ENCODE measurements at regions of chr12 and their contacts with region 1.

Region 1: GRCh38 chr12:18849080-18849479 is 111.2 kb downstream of the CAPZA3 start:
- DNase-seq: no peak
- H3K4me3 ChIP-seq: no peak overlapping the region
- H3K27ac ChIP-seq: no peak overlapping the region
- H3K4me1 ChIP-seq: no peaks in the 10 kb centered on the region
- H3K27me3 ChIP-seq: no peaks in the 10 kb centered on the region
- CTCF ChIP-seq: no peak

Region 2: GRCh38 chr12:19093218-19093617 is 244.1 kb after region 1 on chr12:
- CTCF ChIA-PET with region 1: no interaction called
- POLR2A ChIA-PET with region 1: no interaction called
- intact Hi-C with region 1: no loop called
- DNase-seq: no peak
- H3K4me3 ChIP-seq: no peak overlapping the region
- H3K27ac ChIP-seq: no peak overlapping the region
- H3K4me1 ChIP-seq: peaks cover 13% of the 10 kb centered on the region
- H3K27me3 ChIP-seq: no peaks in the 10 kb centered on the region
- CTCF ChIP-seq: no peak

Region 3: DNA sequence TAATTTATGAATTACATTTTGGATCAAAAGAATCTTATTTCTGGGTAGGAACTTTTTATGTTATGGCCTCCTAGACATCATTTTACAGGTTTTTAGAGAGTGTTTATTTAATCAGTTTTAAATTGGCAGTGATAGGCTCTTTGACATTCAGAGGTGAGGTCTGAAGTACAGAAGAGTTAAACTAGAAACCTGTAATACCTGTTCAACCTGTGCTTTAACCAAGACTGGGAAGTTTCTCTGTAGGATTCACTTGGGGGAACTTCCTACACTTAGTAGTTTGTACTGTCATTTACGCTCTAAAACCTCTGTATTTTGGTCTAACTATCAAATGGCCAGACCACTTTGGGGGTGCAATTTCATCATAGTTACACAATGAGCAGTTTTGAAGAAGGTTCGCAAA is 316.4 kb after region 1 on chr12:
- CTCF ChIA-PET with region 1: interaction called, 19 read pairs
- POLR2A ChIA-PET with region 1: no interaction called
- intact Hi-C with region 1: no loop called
- DNase-seq: peak in 1 of 2 experiments; percentile 66
- H3K4me3 ChIP-seq: no peak overlapping the region
- H3K27ac ChIP-seq: no peak overlapping the region
- H3K4me1 ChIP-seq: peaks cover 19% of the 10 kb centered on the region
- H3K27me3 ChIP-seq: no peaks in the 10 kb centered on the region
- CTCF ChIP-seq: no peak

Measured in PC-9 (cell line).